ENCODE measurements at regions of chr3 and their contacts with region 1.

Region 1: DNA sequence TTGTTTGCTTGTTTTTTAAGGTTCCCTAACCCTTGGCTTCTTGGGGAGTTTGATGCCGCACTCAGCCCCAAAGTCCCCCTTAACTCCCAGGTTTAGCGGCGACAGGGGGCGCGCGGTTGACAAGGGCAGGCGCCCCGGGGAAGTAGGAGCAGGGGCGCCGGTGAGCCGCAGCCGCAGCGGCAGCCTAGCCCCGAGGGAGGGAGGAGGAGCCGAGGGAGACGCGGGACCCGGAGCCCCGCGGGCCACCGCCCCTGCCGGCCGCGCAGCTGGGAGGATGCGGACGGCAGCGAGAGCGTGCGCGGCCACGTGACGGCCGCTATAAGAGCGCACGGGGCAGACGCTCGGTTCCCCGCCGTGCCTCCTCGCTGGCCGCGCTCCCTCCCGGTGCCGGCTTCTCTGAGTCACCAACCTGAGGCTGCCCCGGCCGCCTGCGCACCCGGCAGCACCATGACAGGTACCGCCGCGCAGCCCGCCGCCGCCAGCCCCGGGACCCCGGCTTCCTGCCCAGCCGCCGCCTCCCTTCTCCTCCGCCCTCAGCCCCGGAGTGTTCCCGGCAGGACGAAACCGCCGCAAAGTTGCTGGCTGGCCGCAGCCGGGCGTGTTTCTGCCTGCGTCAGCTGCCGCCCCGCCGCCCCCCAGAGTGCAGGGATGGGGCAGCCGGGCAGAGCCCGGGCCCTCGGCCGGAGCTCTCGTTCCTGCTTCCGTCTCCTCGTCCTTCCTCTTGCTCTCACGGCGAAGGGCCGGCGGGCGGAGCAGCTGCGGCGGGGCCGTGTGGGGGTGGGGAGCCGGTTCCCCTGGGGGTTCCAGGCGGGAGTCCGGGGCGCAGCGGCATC is at the start of gene GYG1:
- DNase-seq: peak; percentile 75 to 83
- H3K4me3 ChIP-seq: peak within 1 kb of the TSS; percentile 88
- H3K4me3 Mint-ChIP-seq: peak within 1 kb of the TSS; percentile 75
- H3K27ac Mint-ChIP-seq: peak within 1 kb of the TSS; percentile 45
- H3K4me1 ChIP-seq: peaks cover 7% of the 10 kb centered on the region; the same call in 1 of the 2 replicates
- H3K4me1 Mint-ChIP-seq: no peaks in the 10 kb centered on the region
- H3K27me3 ChIP-seq: no peaks in the 10 kb centered on the region
- H3K27me3 Mint-ChIP-seq: no peaks in the 10 kb centered on the region
- CTCF ChIP-seq: peak; percentile 29 to 48
- total RNA-seq, gene GYG1: 28.0 and 29.2 TPM in 2 replicates

Region 2: DNA sequence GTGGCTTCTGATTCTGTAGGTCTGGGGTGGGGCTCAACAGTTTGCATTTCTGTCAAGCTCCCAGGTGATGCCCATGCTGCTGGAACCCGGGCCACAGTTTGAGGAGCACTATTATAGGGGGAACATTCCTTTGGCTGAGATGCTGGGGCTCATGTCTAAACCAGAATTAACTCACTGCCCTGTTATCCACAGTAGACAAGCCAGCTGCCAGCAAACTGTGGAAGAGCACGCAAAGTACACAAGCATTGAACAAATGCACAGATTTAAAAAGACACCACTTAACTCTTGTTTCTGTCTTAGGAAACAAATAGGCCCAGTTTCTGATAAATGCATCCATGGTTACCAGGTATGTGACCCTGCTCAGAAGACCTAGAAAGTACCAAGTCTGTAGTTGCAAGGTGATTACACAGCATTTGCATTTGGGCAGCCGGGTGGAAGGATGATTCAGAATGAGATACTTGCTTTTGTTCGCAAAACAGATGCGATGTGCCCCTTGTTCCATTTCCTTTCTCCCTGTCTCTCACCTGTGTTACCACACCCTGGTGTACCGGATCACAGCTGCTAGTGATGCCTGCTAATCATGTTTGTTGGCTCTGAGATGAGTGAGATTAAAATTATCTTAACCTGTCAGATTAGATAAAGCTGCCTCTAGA is 12.4 kb after region 1 on chr3:
- CTCF ChIA-PET with region 1: no interaction called
- POLR2A ChIA-PET with region 1: no interaction called
- intact Hi-C with region 1: no loop called
- DNase-seq: no peak
- H3K4me3 ChIP-seq: no peak overlapping the region
- H3K4me3 Mint-ChIP-seq: no peak overlapping the region
- H3K27ac Mint-ChIP-seq: no peak overlapping the region
- H3K4me1 ChIP-seq: no peaks in the 10 kb centered on the region
- H3K4me1 Mint-ChIP-seq: peaks cover 13% of the 10 kb centered on the region
- H3K27me3 ChIP-seq: no peaks in the 10 kb centered on the region
- H3K27me3 Mint-ChIP-seq: no peaks in the 10 kb centered on the region
- CTCF ChIP-seq: no peak

Region 3: GRCh38 chr3:149031096-149031495 is 39.7 kb after region 1 on chr3:
- CTCF ChIA-PET with region 1: interaction called, 3 read pairs
- POLR2A ChIA-PET with region 1: no interaction called
- intact Hi-C with region 1: loop called (anchors 5 kb)
- DNase-seq: no peak
- H3K4me3 ChIP-seq: no peak overlapping the region
- H3K4me3 Mint-ChIP-seq: no peak overlapping the region
- H3K27ac Mint-ChIP-seq: no peak overlapping the region
- H3K4me1 ChIP-seq: no peaks in the 10 kb centered on the region
- H3K4me1 Mint-ChIP-seq: no peaks in the 10 kb centered on the region
- H3K27me3 ChIP-seq: no peaks in the 10 kb centered on the region
- H3K27me3 Mint-ChIP-seq: no peaks in the 10 kb centered on the region
- CTCF ChIP-seq: no peak

Region 4: GRCh38 chr3:149086232-149086988 is 95.0 kb after region 1 on chr3 and contains the start of gene HLTF:
- CTCF ChIA-PET with region 1: no interaction called
- POLR2A ChIA-PET with region 1: no interaction called
- intact Hi-C with region 1: loop called (anchors 5 kb)
- DNase-seq: peak; percentile 97 to 98
- H3K4me3 ChIP-seq: peak within 1 kb of the TSS; percentile 78
- H3K4me3 Mint-ChIP-seq: peak within 1 kb of the TSS; percentile 91
- H3K27ac Mint-ChIP-seq: peak within 1 kb of the TSS; percentile 82
- H3K4me1 ChIP-seq: peaks cover 15% of the 10 kb centered on the region
- H3K4me1 Mint-ChIP-seq: peaks cover 5% of the 10 kb centered on the region
- H3K27me3 ChIP-seq: no peaks in the 10 kb centered on the region
- H3K27me3 Mint-ChIP-seq: no peaks in the 10 kb centered on the region
- CTCF ChIP-seq: no peak
- total RNA-seq, gene HLTF: 50.2 and 53.0 TPM in 2 replicates

Measured in Caco-2 (cell line).